Astrocyte of the cerebellum (primary cell): ENCODE measurements at regions of chr6 and their contacts with region 1.

Region 1: GRCh38 chr6:18148304-18149025 is 6.4 kb downstream of the TPMT start:
- DNase-seq: no peak
- H3K4me3 ChIP-seq: no peak overlapping the region
- CTCF ChIP-seq: no peak

Region 2: GRCh38 chr6:17820055-17820454 is 328.4 kb before region 1 on chr6:
- in situ Hi-C with region 1: loop called (anchors 25 kb)
- DNase-seq: no peak
- H3K4me3 ChIP-seq: no peak overlapping the region
- CTCF ChIP-seq: no peak

Region 3: DNA sequence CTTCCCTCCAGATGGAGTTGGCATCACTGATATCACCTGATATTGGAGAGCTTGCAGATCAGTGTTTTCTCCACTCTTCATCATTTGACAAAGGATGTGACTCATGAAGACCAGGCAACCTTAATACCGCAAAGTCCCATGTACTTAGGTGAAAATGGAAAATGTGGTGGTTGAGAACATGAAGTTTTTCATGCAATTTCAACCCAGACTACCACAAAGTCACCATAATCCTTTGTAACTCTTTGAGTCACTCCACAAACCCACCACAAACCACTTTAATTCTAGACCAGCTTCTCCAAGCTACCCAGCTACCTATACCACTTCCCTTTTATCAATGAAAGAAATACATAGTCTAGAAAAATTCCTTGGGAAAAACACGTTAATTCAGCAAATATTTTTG is 33.1 kb before region 1 on chr6:
- in situ Hi-C with region 1: no loop called
- DNase-seq: no peak
- H3K4me3 ChIP-seq: no peak overlapping the region
- CTCF ChIP-seq: no peak